AG04449 (cell line): ENCODE measurements at regions of chr6 and their contacts with region 1.

Region 1: DNA sequence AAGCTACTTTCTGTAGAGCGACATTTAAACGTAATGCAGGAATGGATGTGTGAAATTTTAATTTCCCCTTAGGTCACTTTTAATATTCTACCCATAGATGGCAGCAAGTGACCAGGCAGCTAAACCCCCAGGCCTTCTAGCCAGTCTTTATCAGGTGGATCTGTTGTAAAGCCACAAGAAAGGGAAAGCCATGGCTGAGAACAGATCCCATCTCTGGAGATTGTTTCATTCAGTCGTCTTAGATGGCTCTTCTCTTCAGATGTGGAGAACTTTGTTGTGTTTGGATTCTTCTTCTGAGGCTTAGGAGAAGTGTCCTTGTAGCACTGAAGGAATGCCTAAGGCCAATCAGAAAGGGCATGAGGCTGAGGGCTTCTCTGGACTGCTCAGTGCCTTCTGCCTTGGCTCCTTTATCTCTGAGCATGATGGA is 15.8 kb upstream of the RNF182 start:
- DNase-seq: peak; percentile 38
- H3K4me3 ChIP-seq: no peak overlapping the region
- CTCF ChIP-seq: peak; percentile 47

Region 2: GRCh38 chr6:13885601-13886000 is 23.4 kb before region 1 on chr6:
- CTCF ChIA-PET with region 1: interaction called, 19 read pairs
- POLR2A ChIA-PET with region 1: no interaction called
- DNase-seq: no peak
- H3K4me3 ChIP-seq: no peak overlapping the region
- CTCF ChIP-seq: no peak

Region 3: DNA sequence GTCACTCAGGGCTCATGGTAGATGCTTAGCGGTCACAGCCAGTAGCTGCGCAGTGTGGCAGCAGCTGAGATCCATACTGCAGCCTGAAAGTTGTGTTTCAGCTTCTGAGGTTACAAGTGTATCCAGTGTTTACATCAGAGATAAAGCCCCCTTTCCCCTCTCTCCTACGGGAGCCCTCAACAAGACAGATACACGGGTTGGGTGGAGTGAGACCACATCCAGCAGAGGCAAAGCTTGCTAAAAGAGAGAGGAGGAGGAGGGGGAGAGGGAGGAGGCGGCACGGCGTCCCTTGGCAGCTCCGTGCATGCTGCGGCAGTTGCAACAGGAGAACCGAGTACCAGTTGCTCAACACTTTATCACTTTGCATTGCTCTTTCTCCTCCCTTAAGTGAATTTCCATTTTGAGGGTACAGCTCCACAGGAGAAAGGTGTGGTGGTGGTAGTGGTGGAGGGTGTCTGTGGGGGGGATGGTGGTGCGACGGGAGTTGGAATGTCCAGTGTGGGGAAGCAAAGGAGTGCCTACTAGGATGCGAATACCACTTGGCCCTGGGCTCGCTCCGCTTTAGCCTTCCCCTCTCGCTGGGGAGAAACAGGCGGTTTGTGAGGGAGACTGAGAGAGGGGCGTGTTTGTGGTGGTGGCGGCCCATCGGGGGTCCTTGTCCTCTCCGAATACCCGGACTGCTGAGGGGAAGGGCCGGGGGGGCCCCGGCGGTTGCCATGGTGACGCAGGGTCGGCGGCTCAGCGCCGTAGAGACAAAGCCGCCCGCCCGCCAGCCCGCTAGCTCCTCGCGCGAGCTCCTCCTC is 15.4 kb after region 1 on chr6:
- CTCF ChIA-PET with region 1: interaction called, 96 read pairs
- POLR2A ChIA-PET with region 1: no interaction called
- DNase-seq: no peak
- H3K4me3 ChIP-seq: peak overlapping the region; percentile 66
- CTCF ChIP-seq: no peak

Region 4: GRCh38 chr6:14046476-14047068 is 137.6 kb after region 1 on chr6:
- CTCF ChIA-PET with region 1: interaction called, 467 read pairs
- POLR2A ChIA-PET with region 1: no interaction called
- DNase-seq: no peak
- H3K4me3 ChIP-seq: no peak overlapping the region
- CTCF ChIP-seq: peak; percentile 82

Region 5: GRCh38 chr6:14075095-14075503 is 166.1 kb after region 1 on chr6:
- CTCF ChIA-PET with region 1: interaction called, 34 read pairs
- POLR2A ChIA-PET with region 1: no interaction called
- DNase-seq: no peak
- H3K4me3 ChIP-seq: peak overlapping the region; percentile 46
- CTCF ChIP-seq: no peak